Posterior cingulate gyrus (tissue), 11 donors: ENCODE measurements at regions of chr21 and their contacts with region 1.

Region 1: GRCh38 chr21:33115631-33116510 is 45.9 kb downstream of the OLIG1 start:
- DNase-seq: peak; percentile 67 to 96 (median 74)

Region 2: DNA sequence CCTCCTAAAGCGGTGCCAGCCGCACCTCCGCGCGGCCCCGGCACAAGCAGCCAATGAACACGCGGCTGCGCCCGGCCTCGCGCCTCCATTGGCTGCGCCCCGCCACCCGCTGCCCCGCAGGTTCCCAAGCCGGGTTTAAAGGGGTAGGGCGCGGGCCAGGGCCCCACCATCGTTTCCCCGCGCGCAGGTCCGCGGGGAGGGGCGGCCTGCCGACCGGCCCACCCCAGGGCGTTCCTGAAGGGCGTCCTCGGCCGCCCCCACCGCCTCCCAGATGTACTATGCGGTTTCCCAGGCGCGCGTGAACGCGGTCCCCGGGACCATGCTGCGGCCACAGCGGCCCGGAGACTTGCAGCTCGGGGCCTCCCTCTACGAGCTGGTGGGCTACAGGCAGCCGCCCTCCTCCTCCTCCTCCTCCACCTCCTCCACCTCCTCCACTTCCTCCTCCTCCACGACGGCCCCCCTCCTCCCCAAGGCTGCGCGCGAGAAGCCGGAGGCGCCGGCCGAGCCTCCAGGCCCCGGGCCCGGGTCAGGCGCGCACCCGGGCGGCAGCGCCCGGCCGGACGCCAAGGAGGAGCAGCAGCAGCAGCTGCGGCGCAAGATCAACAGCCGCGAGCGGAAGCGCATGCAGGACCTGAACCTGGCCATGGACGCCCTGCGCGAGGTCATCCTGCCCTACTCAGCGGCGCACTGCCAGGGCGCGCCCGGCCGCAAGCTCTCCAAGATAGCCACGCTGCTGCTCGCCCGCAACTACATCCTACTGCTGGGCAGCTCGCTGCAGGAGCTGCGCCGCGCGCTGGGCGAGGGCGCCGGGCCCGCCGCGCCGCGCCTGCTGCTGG is 45.7 kb before region 1 on chr21 and contains the start of gene OLIG1:
- intact Hi-C with region 1: loop called (anchors 2 kb)
- DNase-seq: peak; percentile 66 to 97 (median 76)